Mammary epithelial cell (primary cell): ENCODE measurements at regions of chr12 and their contacts with region 1.

Region 1: DNA sequence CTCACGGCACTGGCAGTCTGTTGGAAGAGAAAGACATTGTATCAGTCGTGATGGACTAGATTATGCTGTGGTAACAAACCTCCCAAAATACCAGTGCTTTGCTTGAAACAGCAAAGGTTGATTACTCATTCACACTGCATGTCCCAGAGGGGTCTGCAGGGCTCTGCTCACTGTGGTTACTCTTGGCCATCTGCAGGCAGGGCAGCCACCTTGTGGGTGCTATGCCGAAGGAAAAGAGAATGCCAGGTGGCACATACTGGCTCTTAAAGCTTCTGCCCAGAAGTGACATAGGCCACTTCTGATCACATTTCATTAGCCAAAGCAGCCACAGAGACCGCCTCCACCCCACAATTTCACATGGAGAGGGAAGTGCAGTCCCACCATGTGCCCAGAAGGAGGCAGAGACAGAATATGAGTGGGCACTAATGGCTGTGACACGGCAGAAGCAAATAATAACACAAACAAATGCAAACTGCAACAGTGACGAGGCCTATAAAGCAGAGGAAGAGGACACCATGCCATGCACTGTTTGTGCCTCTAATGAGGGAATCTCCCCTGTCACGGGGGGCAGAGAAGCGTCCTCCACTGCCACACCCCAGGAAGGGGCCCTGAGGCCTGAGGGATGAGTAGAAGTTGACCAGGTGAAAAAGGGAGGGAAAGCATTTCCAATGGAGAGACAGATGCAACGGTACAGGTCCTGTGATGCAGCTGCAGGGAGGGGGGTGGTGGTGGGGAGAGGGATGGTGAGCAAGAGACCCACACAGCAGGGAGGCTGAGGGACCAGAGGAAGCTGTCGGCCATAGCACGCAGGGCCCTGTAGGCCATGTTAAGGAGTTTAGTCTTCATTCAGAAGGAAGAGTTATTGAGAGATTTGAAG is 51.7 kb upstream of the KICS2 start:
- DNase-seq: peak; percentile 9
- H3K4me3 ChIP-seq: no peak overlapping the region
- H3K27ac ChIP-seq: no peak overlapping the region
- H3K4me1 ChIP-seq: no peaks in the 10 kb centered on the region
- H3K27me3 ChIP-seq: no peaks in the 10 kb centered on the region
- CTCF ChIP-seq: peak; percentile 56 to 79

Region 2: GRCh38 chr12:64385468-64385867 is 111.7 kb after region 1 on chr12:
- CTCF ChIA-PET with region 1: no interaction called
- dilution Hi-C with region 1: no loop called
- in situ Hi-C with region 1: loop called (anchors 5 to 10 kb)
- intact Hi-C with region 1: no loop called
- DNase-seq: peak; percentile 82
- H3K4me3 ChIP-seq: no peak overlapping the region
- H3K27ac ChIP-seq: no peak overlapping the region
- H3K4me1 ChIP-seq: peaks cover 18% of the 10 kb centered on the region
- H3K27me3 ChIP-seq: no peaks in the 10 kb centered on the region
- CTCF ChIP-seq: no peak

Region 3: GRCh38 chr12:64636856-64637255 is 363.1 kb after region 1 on chr12:
- CTCF ChIA-PET with region 1: no interaction called
- dilution Hi-C with region 1: no loop called
- in situ Hi-C with region 1: no loop called
- intact Hi-C with region 1: no loop called
- DNase-seq: no peak
- H3K4me3 ChIP-seq: no peak overlapping the region
- H3K27ac ChIP-seq: no peak overlapping the region
- H3K4me1 ChIP-seq: peaks cover 15% of the 10 kb centered on the region
- H3K27me3 ChIP-seq: no peaks in the 10 kb centered on the region
- CTCF ChIP-seq: no peak

Region 4: GRCh38 chr12:64737539-64737938 is 463.8 kb after region 1 on chr12:
- CTCF ChIA-PET with region 1: no interaction called
- dilution Hi-C with region 1: no loop called
- in situ Hi-C with region 1: no loop called
- intact Hi-C with region 1: no loop called
- DNase-seq: peak; percentile 42
- H3K4me3 ChIP-seq: no peak overlapping the region
- H3K27ac ChIP-seq: no peak overlapping the region
- H3K4me1 ChIP-seq: peaks cover 32% of the 10 kb centered on the region
- H3K27me3 ChIP-seq: no peaks in the 10 kb centered on the region
- CTCF ChIP-seq: no peak